ENCODE measurements at regions of chr14 and their contacts with region 1.

Region 1: DNA sequence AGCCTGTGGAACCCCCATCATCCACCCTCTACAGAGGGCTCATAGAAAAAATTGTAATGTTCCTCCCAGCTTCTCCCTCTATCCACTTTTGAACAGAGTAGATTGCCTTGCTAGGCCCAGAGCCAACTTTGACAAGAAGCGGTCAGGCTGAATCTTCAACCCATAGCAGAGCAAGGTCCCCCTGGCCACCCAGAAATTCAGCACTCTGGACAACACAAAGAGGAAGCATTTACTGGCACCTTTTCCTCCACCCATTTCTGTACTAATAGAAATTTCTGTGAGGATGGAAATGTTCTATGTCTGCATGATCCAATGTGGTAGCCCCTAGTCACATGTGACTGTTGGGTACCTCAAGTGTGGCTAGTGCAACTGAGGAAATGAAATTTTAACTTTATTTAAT is 42.7 kb upstream of the OXA1L start:
- DNase-seq: no peak
- ATAC-seq: no peak
- H3K4me3 ChIP-seq: no peak overlapping the region
- H3K27ac ChIP-seq: no peak overlapping the region
- H3K4me1 ChIP-seq: no peaks in the 10 kb centered on the region
- H3K27me3 ChIP-seq: no peaks in the 10 kb centered on the region
- CTCF ChIP-seq: no peak

Region 2: GRCh38 chr14:22589096-22589839 is 134.5 kb before region 1 on chr14 and contains the start of gene DAD1:
- CTCF ChIA-PET with region 1: no interaction called
- POLR2A ChIA-PET with region 1: no interaction called
- in situ Hi-C with region 1: no loop called
- intact Hi-C with region 1: no loop called
- DNase-seq: peak; percentile 97
- ATAC-seq: peak; percentile 99
- H3K4me3 ChIP-seq: peak within 1 kb of the TSS; percentile 91 to 98
- H3K27ac ChIP-seq: peak within 1 kb of the TSS; percentile 96
- H3K4me1 ChIP-seq: peaks cover 4% of the 10 kb centered on the region
- H3K27me3 ChIP-seq: no peaks in the 10 kb centered on the region; the same call in 1 of the 2 replicates
- CTCF ChIP-seq: no peak; the same call in 1 of the 2 replicates
- total RNA-seq, gene DAD1: 163 TPM

Region 3: GRCh38 chr14:22646570-22647254 is 77.1 kb before region 1 on chr14:
- CTCF ChIA-PET with region 1: no interaction called
- POLR2A ChIA-PET with region 1: interaction called, 11 read pairs
- in situ Hi-C with region 1: no loop called
- intact Hi-C with region 1: no loop called
- DNase-seq: no peak
- ATAC-seq: no peak
- H3K4me3 ChIP-seq: no peak overlapping the region
- H3K27ac ChIP-seq: no peak overlapping the region
- H3K4me1 ChIP-seq: no peaks in the 10 kb centered on the region
- H3K27me3 ChIP-seq: no peaks in the 10 kb centered on the region
- CTCF ChIP-seq: no peak

Region 4: DNA sequence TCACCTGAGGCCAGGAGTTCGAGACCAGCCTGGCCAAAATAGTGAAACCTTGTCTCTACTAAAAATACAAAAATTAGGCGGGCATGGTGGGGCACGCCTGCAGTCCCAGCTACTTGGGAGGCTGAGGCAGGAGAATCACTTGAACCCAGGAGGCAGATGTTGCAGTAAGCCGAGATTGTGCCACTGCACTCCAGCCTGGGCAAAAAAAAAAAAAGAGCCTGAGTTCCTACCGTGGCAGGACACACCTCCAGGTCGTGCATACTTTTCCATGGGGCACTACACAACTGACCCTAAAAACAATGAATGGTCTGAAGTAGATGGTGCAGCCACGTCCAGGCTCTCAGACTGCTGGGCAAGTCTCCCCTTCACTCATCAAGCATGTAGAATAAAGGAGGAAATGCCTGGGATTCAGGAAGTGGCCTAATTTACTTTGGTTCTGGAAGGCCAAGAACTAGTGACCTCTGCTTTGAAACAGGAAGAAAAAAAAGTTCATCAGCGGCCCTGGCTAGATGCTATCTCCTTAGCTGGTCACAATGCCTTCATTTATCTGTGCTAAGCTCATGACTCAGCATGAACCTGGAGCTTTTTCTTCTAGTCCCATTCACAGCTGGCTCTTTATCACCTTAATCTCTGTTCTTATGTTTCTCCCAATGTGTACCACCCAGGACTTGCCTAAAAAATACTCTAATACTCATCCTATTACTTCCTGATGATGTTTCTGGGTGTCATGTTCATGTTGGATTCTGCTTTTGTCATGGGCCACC is 23.8 kb before region 1 on chr14:
- CTCF ChIA-PET with region 1: no interaction called
- POLR2A ChIA-PET with region 1: no interaction called
- in situ Hi-C with region 1: no loop called
- intact Hi-C with region 1: no loop called
- DNase-seq: no peak
- ATAC-seq: no peak
- H3K4me3 ChIP-seq: no peak overlapping the region
- H3K27ac ChIP-seq: no peak overlapping the region
- H3K4me1 ChIP-seq: no peaks in the 10 kb centered on the region
- H3K27me3 ChIP-seq: no peaks in the 10 kb centered on the region; the same call in 1 of the 2 replicates
- CTCF ChIP-seq: no peak